PC-9 (cell line): ENCODE measurements at regions of chr3 and their contacts with region 1.

Region 1: GRCh38 chr3:124860599-124860998 is 26.6 kb downstream of the ITGB5 start:
- DNase-seq: peak; percentile 86 to 95
- H3K4me3 ChIP-seq: no peak overlapping the region
- H3K27ac ChIP-seq: peak overlapping the region; percentile 65
- H3K4me1 ChIP-seq: peaks cover 26% of the 10 kb centered on the region
- H3K27me3 ChIP-seq: no peaks in the 10 kb centered on the region
- CTCF ChIP-seq: no peak

Region 2: GRCh38 chr3:124812291-124813265 is 48.0 kb before region 1 on chr3:
- CTCF ChIA-PET with region 1: no interaction called
- POLR2A ChIA-PET with region 1: no interaction called
- intact Hi-C with region 1: loop called (anchors 1 kb)
- DNase-seq: peak; percentile 92 to 95
- H3K4me3 ChIP-seq: peak overlapping the region; percentile 35; the same call in 1 of the 2 replicates
- H3K27ac ChIP-seq: peak overlapping the region; percentile 96
- H3K4me1 ChIP-seq: peaks cover 52% of the 10 kb centered on the region
- H3K27me3 ChIP-seq: no peaks in the 10 kb centered on the region
- CTCF ChIP-seq: no peak

Region 3: DNA sequence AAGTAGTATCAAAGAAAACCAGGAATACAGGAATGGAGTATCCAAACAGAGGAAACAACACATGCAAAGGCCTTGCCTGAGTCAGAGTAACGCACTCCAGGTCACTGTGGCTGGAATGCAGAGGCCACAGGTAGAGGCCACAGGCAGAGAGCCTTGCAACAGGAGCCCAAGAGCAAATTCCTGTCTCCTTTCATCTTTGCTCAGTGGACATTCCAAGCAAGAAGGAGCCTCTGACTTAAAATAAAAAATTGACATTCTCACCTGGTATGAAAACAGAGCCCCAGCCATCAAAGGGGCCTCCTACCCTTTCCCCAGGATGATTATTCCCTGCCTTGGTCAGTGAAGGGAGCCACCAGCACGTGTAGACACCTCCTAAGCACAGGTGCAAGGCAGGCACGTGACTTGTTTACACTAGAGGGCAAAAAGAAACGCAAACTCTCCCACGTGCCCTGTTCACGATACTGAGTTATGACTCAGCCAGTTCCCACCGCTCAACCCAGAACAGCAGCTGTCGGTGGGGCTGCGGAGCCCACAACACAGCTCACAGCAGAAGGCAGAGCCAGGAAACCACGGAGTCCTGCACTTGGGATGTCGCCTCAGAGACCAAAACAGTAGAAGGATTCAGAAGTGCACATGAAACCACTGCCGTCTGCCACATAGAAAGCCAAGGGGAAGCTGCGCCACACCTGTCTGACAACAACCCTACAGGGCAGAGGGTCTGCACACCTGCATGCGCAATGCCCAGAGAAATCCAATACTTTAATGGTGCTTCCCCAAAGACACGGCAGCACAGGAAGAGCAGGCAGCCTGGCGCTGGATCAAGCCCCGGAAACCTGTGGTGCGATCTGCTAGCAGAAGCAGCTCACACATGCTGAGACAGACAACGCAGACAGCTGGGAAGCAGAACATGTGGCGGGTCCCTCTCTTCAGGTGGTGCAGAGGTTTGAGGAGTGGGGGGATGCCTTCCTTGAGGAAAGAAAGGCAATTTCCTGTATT is 25.6 kb before region 1 on chr3:
- CTCF ChIA-PET with region 1: no interaction called
- POLR2A ChIA-PET with region 1: no interaction called
- intact Hi-C with region 1: loop called (anchors 1 kb)
- DNase-seq: peak; percentile 85 to 98
- H3K4me3 ChIP-seq: peak overlapping the region; percentile 42; the same call in 1 of the 2 replicates
- H3K27ac ChIP-seq: peak overlapping the region; percentile 99
- H3K4me1 ChIP-seq: peaks cover 79% of the 10 kb centered on the region
- H3K27me3 ChIP-seq: no peaks in the 10 kb centered on the region
- CTCF ChIP-seq: no peak

Region 4: GRCh38 chr3:124845406-124845805 is 15.2 kb before region 1 on chr3:
- CTCF ChIA-PET with region 1: no interaction called
- POLR2A ChIA-PET with region 1: no interaction called
- intact Hi-C with region 1: loop called (anchors 2 kb)
- DNase-seq: peak; percentile 76 to 88
- H3K4me3 ChIP-seq: no peak overlapping the region
- H3K27ac ChIP-seq: peak overlapping the region; percentile 69
- H3K4me1 ChIP-seq: peaks cover 27% of the 10 kb centered on the region
- H3K27me3 ChIP-seq: no peaks in the 10 kb centered on the region
- CTCF ChIP-seq: no peak

Region 5: GRCh38 chr3:124887177-124887931 is 26.8 kb after region 1 on chr3 and contains the start of gene ITGB5:
- CTCF ChIA-PET with region 1: no interaction called
- POLR2A ChIA-PET with region 1: interaction called, 10 read pairs
- intact Hi-C with region 1: no loop called
- DNase-seq: peak; percentile 56 to 89
- H3K4me3 ChIP-seq: peak within 1 kb of the TSS; percentile 84
- H3K27ac ChIP-seq: peak within 1 kb of the TSS; percentile 69
- H3K4me1 ChIP-seq: peaks cover 41% of the 10 kb centered on the region
- H3K27me3 ChIP-seq: no peaks in the 10 kb centered on the region
- CTCF ChIP-seq: no peak
- total RNA-seq, gene ITGB5: 226 and 287 TPM in 2 replicates